Adrenal gland (tissue), 19 donors: ENCODE measurements at regions of chr7 and their contacts with region 1.

Region 1: DNA sequence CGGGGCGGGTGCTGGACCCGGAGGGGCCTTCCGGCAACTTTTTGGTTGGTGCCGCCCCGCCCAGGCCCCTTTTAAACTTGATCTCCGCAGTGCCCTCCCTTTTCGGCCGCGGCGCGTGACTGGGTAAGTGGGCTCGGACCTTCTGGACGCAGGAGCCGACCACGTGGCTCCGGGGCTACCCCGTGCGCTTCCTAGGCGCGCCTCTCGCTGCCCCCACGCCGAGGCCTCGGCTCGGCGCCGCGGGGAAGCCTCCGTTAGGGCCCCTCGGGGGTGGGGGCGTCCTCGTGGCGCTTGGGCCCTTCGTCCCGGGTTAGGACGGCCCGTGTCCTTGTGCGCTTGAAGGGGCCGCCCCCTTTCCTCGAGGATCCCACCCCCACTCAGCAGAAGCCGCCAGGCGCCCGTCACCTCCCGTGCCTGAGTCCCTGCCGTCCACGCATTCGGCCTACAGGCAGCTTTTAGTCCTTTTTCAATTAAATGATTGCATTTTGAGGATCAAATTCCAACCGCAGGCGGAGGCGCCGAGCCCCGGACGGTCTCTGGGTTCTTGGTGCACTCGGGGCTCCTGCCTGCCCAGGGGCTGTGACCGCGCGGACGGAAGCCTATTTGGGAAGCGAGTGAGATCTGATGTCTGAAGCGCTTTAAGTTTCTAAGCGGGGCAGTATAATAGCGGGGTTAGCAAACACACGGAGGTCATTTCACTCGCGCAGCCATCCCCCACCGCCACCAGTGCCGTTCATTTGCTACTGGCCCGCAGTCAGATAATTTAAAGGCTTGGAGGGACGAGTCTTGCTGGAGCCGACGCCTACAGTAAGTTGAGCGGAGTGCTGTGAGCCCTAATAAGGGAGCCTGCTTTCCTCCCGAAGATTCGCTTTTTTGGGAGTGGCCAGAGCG is 31.8 kb upstream of the TOMM7 start:
- DNase-seq: peak; percentile 78 to 93 (median 88)
- H3K4me3 ChIP-seq: peak overlapping the region; percentile 27 to 93 (median 68)
- H3K27ac ChIP-seq: peak overlapping the region in 4 of 5 donors; percentile 67 to 92 (median 86)
- H3K4me1 ChIP-seq: peaks cover 0 to 4% of the 10 kb centered on the region in 2 donors
- H3K27me3 ChIP-seq: no peaks in the 10 kb centered on the region
- CTCF ChIP-seq: peak in 5 of 6 experiments; percentile 6 to 79 (median 43)
- POLR2A ChIP-seq: peak; percentile 15 to 51

Region 2: GRCh38 chr7:23013715-23014649 is 159.6 kb after region 1 on chr7 and contains the start of gene HYCC1:
- intact Hi-C with region 1: loop called in 1 of 2 experiments (anchors 10 kb)
- DNase-seq: peak; percentile 98 to 100 (median 99)
- H3K4me3 ChIP-seq: peak within 1 kb of the TSS; percentile 46 to 83 (median 58)
- H3K27ac ChIP-seq: peak within 1 kb of the TSS in 3 of 5 donors; percentile 69 to 81 (median 75)
- H3K4me1 ChIP-seq: peaks cover 6 to 19% of the 10 kb centered on the region in 2 donors
- H3K27me3 ChIP-seq: no peaks in the 10 kb centered on the region
- CTCF ChIP-seq: peak; percentile 40 to 79 (median 68)
- POLR2A ChIP-seq: peak; percentile 53 to 93
- total RNA-seq, gene HYCC1: 14.1 to 27.1 (median 18.4) TPM

Region 3: DNA sequence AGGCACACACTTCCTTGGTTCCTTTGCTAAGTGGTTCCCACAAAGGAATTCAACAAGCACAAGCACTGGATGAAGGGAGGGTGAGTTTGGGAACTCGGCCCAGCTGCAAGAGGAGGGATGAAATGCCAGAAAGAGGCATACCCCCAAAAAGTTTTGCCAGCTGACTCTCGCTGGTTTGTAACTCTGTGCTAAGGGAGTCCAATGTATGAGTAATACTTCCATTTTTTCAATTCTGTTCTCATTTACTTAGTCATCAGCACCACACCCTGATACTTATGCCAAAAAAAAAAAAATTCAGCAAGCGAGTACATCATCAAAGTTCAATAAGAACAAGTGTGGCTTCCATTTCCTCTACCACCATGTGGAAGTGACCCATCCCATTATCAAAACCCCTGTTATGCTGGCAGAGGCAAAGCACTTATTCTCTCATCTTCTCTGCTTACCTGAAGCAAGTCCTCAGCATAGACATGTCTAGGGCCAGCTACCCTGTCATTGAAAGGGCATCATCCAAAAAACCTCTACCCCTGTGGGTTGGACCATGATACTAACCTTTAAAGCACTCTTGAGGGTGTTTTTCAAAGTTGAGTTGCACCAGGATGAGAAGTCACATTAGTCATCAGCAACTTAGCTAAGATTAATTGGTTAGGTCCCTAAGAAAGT is 166.5 kb after region 1 on chr7:
- intact Hi-C with region 1: loop called (anchors 10 kb)
- DNase-seq: no peak
- H3K4me3 ChIP-seq: no peak overlapping the region
- H3K27ac ChIP-seq: no peak overlapping the region
- H3K4me1 ChIP-seq: no peaks in the 10 kb centered on the region
- H3K27me3 ChIP-seq: no peaks in the 10 kb centered on the region
- CTCF ChIP-seq: no peak
- POLR2A ChIP-seq: no peak